ENCODE measurements at regions of chr15 and their contacts with region 1.

Region 1: DNA sequence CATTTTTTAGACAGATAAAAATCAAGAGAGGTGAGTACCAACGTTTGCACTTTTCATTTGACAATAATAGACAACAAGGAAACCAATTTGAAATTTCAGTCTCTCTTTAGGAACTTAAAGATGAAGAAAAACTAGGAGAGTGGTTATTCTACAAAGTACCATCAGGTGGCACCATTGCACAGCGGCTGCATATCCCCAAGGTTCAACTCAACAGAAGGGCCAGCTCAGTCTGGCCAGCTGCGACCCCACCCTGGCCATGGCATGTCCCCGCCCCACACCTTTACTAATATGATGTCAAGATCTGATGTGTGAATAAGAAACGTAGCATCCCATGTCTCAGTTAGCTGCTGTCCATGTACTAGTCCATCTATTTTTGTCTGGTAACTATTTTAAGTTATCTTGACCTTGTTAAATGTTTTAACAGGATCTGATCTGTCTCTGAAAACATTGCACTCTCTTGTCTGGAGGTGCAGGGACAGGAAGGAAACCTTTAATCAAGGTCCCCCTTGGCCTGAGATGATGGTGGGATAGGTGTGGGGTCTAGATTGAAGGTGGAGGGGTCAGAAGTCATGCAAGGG is 35.5 kb upstream of the CGNL1 start:
- DNase-seq: peak; percentile 40
- H3K4me3 ChIP-seq: no peak overlapping the region
- H3K27ac ChIP-seq: no peak overlapping the region
- H3K4me1 ChIP-seq: no peaks in the 10 kb centered on the region
- H3K27me3 ChIP-seq: no peaks in the 10 kb centered on the region
- CTCF ChIP-seq: peak; percentile 90

Region 2: DNA sequence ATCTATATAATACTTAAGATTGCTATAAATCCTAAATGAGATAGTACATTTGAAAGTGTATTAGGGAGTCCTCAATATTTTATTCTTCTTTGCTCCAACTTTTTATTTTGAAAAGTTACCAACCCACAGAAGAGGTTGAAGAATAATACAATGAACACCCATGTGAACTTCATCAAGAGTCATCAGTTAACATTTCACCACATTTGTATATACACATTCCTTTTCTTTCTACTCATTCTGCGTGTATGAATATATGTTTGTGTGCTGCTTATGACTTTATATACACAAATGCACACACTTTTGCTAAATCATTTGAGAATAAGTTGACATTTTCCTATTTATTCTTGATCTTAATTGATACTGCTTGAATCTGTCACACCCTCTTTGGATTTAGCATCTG is 157.7 kb before region 1 on chr15:
- intact Hi-C with region 1: no loop called
- DNase-seq: no peak
- H3K4me3 ChIP-seq: no peak overlapping the region
- H3K27ac ChIP-seq: no peak overlapping the region
- H3K4me1 ChIP-seq: no peaks in the 10 kb centered on the region
- H3K27me3 ChIP-seq: no peaks in the 10 kb centered on the region
- CTCF ChIP-seq: no peak

Region 3: DNA sequence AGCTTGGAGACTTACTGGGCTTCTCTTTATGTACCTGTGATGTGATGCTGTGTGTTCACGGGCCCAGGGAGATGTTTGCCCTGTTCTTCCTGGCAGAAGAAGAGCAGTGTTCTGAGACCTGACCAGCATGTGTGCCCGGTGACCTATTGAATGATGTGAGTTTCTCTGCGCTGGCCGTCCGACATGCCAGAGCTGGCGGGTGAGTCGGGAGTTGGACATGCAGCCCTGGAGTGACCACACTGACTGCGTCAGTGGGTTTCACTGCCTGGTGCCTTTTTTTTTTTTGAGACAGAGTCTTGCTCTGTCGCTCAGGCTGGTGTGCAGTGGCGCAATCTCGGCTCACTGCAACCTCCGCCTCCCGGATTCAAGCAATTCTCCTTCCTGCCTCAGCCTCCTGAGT is 77.9 kb after region 1 on chr15:
- intact Hi-C with region 1: no loop called
- DNase-seq: no peak
- H3K4me3 ChIP-seq: no peak overlapping the region
- H3K27ac ChIP-seq: no peak overlapping the region
- H3K4me1 ChIP-seq: no peaks in the 10 kb centered on the region
- H3K27me3 ChIP-seq: no peaks in the 10 kb centered on the region
- CTCF ChIP-seq: no peak

Region 4: DNA sequence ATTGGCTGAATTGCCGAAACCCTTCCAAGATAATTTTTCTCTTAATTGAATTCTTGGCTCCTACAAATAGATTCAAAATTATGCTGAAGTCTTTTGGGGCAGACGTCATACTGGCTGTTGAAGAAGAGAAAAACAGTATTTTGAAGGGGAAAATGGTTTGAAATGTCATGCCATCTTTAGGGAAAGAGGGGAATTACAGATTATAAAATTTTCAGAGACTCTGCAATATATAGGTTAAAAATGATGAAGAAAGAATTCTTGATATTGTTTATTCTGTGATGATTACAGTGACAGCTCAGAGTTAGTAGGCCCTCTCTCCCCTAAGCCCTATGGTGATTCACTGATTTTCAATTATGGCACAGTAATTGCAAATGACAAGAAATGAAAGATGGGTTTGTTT is 121.6 kb after region 1 on chr15:
- intact Hi-C with region 1: loop called (anchors 5 kb)
- DNase-seq: no peak
- H3K4me3 ChIP-seq: no peak overlapping the region
- H3K27ac ChIP-seq: no peak overlapping the region
- H3K4me1 ChIP-seq: no peaks in the 10 kb centered on the region
- H3K27me3 ChIP-seq: no peaks in the 10 kb centered on the region
- CTCF ChIP-seq: no peak

Region 5: DNA sequence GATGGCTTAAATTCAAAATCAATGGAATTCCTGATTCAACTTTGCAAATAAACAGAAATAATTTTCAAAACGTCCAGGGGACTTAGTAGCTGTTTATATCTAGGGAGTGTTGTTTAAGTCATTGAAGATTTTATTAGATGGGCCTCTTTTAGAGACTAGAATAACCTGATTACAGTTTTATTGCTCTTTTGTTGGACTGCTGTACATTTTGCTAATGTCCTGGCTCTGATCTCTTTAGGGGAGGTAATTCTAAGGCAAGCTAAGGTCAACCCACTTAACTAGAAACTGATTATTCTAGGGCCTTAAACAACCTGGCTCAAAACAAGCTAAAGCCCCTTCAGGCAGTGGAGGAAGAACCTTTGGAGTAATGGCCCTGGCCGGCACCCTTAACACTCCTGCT is 189.0 kb after region 1 on chr15:
- intact Hi-C with region 1: loop called (anchors 2 kb)
- DNase-seq: no peak
- H3K4me3 ChIP-seq: no peak overlapping the region
- H3K27ac ChIP-seq: no peak overlapping the region
- H3K4me1 ChIP-seq: no peaks in the 10 kb centered on the region
- H3K27me3 ChIP-seq: no peaks in the 10 kb centered on the region
- CTCF ChIP-seq: no peak

Measured in colonic mucosa (tissue), 4 donors.